ENCODE measurements at regions of chr9 and their contacts with region 1.

Region 1: DNA sequence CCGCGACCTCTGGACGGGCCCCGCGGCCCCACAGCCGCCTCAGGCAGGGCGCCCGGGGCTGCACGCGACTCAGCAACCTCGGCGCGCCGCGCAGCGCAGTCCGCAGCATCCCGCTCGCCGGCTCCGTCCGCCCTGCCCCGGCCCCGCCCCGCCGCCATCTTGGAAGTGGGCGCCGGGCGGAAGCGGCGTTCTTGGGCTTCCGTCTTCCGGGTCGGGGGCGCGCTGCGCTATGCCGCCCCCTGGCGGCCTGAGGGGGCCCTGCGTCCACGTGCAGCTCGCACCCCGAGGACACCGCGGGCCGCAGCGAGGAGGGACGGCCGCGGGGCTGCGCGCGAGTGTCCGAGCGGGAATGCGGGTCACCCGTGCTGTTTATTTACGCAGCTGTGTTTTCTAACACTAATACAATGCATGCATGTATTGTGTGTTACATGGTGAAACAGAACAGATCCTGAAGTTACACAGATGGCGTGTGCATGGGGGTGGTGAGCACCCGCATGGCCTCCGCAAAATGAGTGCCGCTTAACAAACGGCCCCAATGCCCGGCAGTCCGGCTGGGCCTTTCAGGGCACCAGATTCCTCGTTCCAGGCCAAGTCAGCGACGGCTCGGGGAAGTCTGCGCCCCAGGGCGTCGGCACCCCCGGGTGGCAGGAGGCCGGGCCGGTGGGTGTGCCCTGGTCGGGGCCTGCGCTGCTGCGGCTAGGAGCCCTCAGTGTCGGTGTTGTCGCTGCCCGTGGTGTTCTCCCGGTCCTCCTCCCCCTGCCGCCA is at the start of gene DNLZ:
- DNase-seq: peak; percentile 71 to 93 (median 90)
- ATAC-seq: peak; percentile 88
- H3K4me3 ChIP-seq: peak within 1 kb of the TSS; percentile 70
- H3K4me3 Mint-ChIP-seq: peak within 1 kb of the TSS; percentile 65 to 88 (median 84)
- H3K27ac ChIP-seq: peak within 1 kb of the TSS; percentile 75
- H3K27ac Mint-ChIP-seq: peak within 1 kb of the TSS; percentile 62 to 91 (median 75)
- H3K4me1 ChIP-seq: peaks cover 0 to 5% of the 10 kb centered on the region in 2 donors
- H3K4me1 Mint-ChIP-seq: peaks cover 0 to 6% (median 0%) of the 10 kb centered on the region in 7 donors
- H3K27me3 ChIP-seq: no peaks in the 10 kb centered on the region
- H3K27me3 Mint-ChIP-seq: no peaks in the 10 kb centered on the region
- total RNA-seq, gene DNLZ: 17.2 to 27.5 (median 24.8) TPM

Region 2: DNA sequence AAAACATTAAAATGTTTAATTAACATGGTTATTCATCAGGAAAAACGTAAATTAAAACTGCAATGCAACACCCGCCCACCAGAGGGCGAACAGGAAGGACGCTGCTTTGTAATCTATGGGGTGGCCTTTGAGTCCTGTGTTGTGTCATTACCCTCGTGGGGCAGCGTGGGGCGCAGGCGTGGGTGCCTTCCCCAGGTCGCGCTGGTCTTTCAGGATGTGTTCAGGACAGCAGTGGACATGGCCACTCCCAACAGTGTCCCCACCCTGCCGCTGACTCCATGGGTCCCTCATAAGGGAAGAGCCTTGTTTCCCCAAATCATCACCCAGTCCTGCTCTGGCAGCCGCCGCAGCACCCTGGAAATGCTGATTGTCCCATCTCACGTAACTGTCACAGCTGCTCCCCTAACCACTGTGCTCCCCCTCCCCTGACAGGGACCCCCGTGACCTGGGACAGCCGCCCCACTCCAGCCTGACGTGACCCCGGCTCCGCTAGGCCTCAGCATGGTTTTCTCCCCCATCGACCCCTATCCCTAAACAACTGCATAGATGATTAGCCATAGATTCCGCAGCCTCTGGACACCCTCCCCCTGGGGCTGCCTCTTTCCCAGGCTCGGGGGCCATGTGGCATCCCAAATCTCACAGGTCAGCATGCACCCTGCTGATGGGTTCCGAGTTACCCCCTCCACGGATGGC is 760.9 kb before region 1 on chr9:
- CTCF ChIA-PET with region 1: no interaction called
- POLR2A ChIA-PET with region 1: no interaction called
- intact Hi-C with region 1: no loop called
- DNase-seq: peak in 7 of 9 donors; percentile 31 to 56 (median 37)
- ATAC-seq: peak; percentile 61
- H3K4me3 ChIP-seq: no peak overlapping the region
- H3K4me3 Mint-ChIP-seq: no peak overlapping the region
- H3K27ac ChIP-seq: no peak overlapping the region
- H3K27ac Mint-ChIP-seq: no peak overlapping the region
- H3K4me1 ChIP-seq: no peaks in the 10 kb centered on the region
- H3K4me1 Mint-ChIP-seq: peaks cover 0 to 3% (median 0%) of the 10 kb centered on the region in 7 donors
- H3K27me3 ChIP-seq: no peaks in the 10 kb centered on the region
- H3K27me3 Mint-ChIP-seq: peaks cover 7 to 26% (median 8%) of the 10 kb centered on the region in 5 donors

Region 3: GRCh38 chr9:135961277-135961705 is 402.5 kb before region 1 on chr9 and contains the start of gene UBAC1:
- CTCF ChIA-PET with region 1: no interaction called
- POLR2A ChIA-PET with region 1: no interaction called
- intact Hi-C with region 1: loop called in 1 of 2 experiments (anchors 1 kb)
- DNase-seq: peak; percentile 91 to 96 (median 94)
- ATAC-seq: peak; percentile 97
- H3K4me3 ChIP-seq: peak within 1 kb of the TSS; percentile 65
- H3K4me3 Mint-ChIP-seq: peak within 1 kb of the TSS; percentile 78 to 93 (median 88)
- H3K27ac ChIP-seq: peak within 1 kb of the TSS; percentile 82
- H3K27ac Mint-ChIP-seq: peak within 1 kb of the TSS; percentile 74 to 94 (median 83)
- H3K4me1 ChIP-seq: peaks cover 15 to 16% of the 10 kb centered on the region in 2 donors
- H3K4me1 Mint-ChIP-seq: peaks cover 20 to 39% (median 30%) of the 10 kb centered on the region in 7 donors
- H3K27me3 ChIP-seq: no peaks in the 10 kb centered on the region
- H3K27me3 Mint-ChIP-seq: peaks cover 0 to 15% (median 0%) of the 10 kb centered on the region in 5 donors
- total RNA-seq, gene UBAC1: 28.6 to 36.1 (median 32.2) TPM

Region 4: DNA sequence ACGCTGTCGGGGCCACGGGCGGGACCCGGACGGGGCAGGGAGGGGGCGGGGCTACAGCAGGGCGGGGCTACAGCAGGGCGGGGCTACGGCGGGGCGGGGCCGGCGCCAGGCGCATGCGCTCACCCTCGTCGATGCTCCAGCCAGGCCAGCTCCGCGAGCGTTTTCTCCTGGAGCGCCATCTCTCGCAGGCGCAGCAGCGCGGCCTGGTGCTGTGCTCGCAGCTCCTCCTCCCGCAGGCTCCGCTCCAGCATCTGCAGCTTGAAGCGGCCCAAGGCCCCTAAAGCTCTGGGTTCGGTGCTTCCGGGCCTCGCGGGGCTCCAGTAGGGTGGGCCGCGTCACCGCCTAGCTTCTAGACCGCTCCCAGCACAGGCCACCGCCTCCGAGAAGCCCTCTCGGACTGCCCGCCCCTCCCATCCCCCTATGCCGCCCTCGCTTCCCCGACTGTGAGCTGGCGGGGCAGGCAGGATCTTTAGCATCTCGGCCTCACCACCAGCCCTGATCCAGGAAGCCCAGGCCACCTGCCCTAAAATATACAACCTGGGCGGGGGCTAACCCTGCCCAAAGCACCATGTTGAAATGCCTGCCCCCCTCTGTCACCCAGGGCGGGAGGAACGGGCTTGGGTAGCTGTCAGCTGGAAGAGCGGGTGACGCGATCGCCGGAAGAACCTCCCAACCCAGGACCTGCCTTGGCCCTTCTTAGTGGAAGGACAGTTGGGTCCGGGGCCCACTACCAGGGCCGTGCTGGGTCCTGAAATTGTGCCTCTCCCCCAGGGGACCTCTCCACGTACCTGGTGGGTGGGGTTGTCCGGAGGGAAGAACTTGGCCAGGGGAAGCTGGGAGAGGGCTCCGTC is 96.3 kb before region 1 on chr9:
- CTCF ChIA-PET with region 1: no interaction called
- POLR2A ChIA-PET with region 1: interaction called, 4 read pairs
- intact Hi-C with region 1: loop called in 1 of 2 experiments (anchors 1 kb)
- DNase-seq: peak; percentile 70 to 85 (median 80)
- ATAC-seq: peak; percentile 99
- H3K4me3 ChIP-seq: peak overlapping the region; percentile 74
- H3K4me3 Mint-ChIP-seq: peak overlapping the region; percentile 70 to 84 (median 79)
- H3K27ac ChIP-seq: peak overlapping the region; percentile 62
- H3K27ac Mint-ChIP-seq: peak overlapping the region; percentile 57 to 89 (median 77)
- H3K4me1 ChIP-seq: peaks cover 4 to 7% of the 10 kb centered on the region in 2 donors
- H3K4me1 Mint-ChIP-seq: peaks cover 0 to 14% (median 3%) of the 10 kb centered on the region in 7 donors
- H3K27me3 ChIP-seq: no peaks in the 10 kb centered on the region
- H3K27me3 Mint-ChIP-seq: peaks cover 0 to 14% (median 0%) of the 10 kb centered on the region in 5 donors

Region 5: DNA sequence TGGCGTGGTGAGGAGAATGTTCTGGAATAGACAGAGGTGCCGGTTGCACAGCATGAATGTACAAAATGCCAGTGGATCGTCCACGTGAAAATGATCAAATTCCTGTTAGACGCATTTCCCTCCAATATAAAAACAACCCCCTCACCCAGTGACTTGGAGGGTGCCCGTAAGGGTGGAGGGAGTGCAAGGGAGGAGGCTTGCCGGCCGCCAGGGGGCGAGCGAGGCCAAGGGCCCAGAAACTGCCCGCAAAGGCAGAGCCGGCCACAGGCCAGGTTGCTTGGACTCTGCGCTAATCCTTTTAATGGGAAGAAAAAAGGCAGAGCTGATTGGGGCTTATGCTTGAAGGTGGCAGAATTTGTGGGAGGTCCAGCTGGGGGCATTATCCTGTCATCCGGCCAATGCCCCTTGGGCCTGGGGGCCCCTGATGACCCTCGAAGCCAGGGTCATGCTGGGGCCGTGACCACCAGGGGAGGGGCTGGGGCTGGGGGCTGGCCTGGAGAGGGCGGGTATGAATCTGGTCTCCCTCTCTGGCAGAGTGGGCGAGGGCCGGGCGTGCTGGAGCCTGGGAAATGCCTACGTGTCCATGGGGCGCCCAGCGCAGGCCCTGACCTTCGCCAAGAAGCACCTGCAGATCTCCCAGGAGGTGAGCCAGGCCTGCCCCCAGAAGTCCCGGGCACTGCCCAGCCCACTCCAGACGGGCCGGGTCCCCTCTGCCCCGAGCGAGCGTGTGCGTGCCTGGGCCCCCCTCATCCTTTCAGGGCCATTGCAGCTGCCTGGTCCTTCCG is 24.4 kb before region 1 on chr9:
- CTCF ChIA-PET with region 1: no interaction called
- POLR2A ChIA-PET with region 1: no interaction called
- intact Hi-C with region 1: loop called in 1 of 2 experiments (anchors 1 kb)
- DNase-seq: peak in 2 of 9 donors; percentile 43 to 51
- ATAC-seq: peak; percentile 56
- H3K4me3 ChIP-seq: no peak overlapping the region
- H3K4me3 Mint-ChIP-seq: no peak overlapping the region
- H3K27ac ChIP-seq: no peak overlapping the region
- H3K27ac Mint-ChIP-seq: no peak overlapping the region
- H3K4me1 ChIP-seq: no peaks in the 10 kb centered on the region
- H3K4me1 Mint-ChIP-seq: no peaks in the 10 kb centered on the region
- H3K27me3 ChIP-seq: no peaks in the 10 kb centered on the region
- H3K27me3 Mint-ChIP-seq: no peaks in the 10 kb centered on the region

Region 6: GRCh38 chr9:136410500-136411287 is 46.9 kb after region 1 on chr9 and contains the starts of genes ENTR1 and PMPCA:
- CTCF ChIA-PET with region 1: no interaction called
- POLR2A ChIA-PET with region 1: interaction called, 6 read pairs
- intact Hi-C with region 1: loop called in 1 of 2 experiments (anchors 1 kb)
- DNase-seq: peak; percentile 90 to 99 (median 93)
- ATAC-seq: peak; percentile 94
- H3K4me3 ChIP-seq: peak within 1 kb of the TSS; percentile 96
- H3K4me3 Mint-ChIP-seq: peak within 1 kb of the TSS; percentile 83 to 93 (median 90)
- H3K27ac ChIP-seq: peak within 1 kb of the TSS; percentile 97
- H3K27ac Mint-ChIP-seq: peak within 1 kb of the TSS; percentile 78 to 95 (median 90)
- H3K4me1 ChIP-seq: peaks cover 18 to 26% of the 10 kb centered on the region in 2 donors
- H3K4me1 Mint-ChIP-seq: peaks cover 34 to 56% (median 45%) of the 10 kb centered on the region in 7 donors
- H3K27me3 ChIP-seq: no peaks in the 10 kb centered on the region
- H3K27me3 Mint-ChIP-seq: no peaks in the 10 kb centered on the region
- total RNA-seq, gene ENTR1: 56.3 to 89.0 (median 66.6) TPM
- total RNA-seq, gene PMPCA: 60.5 to 86.3 (median 71.6) TPM

Region 7: GRCh38 chr9:136728080-136728547 is 364.3 kb after region 1 on chr9:
- CTCF ChIA-PET with region 1: no interaction called
- POLR2A ChIA-PET with region 1: no interaction called
- intact Hi-C with region 1: loop called in 1 of 2 experiments (anchors 2 kb)
- DNase-seq: peak; percentile 87 to 97 (median 92)
- ATAC-seq: peak; percentile 96
- H3K4me3 ChIP-seq: peak overlapping the region; percentile 87
- H3K4me3 Mint-ChIP-seq: peak overlapping the region in 9 of 10 donors; percentile 47 to 99 (median 95)
- H3K27ac ChIP-seq: peak overlapping the region; percentile 83
- H3K27ac Mint-ChIP-seq: peak overlapping the region in 7 of 9 donors; percentile 47 to 93 (median 92)
- H3K4me1 ChIP-seq: peaks cover 16 to 17% of the 10 kb centered on the region in 2 donors
- H3K4me1 Mint-ChIP-seq: peaks cover 12 to 37% (median 28%) of the 10 kb centered on the region in 7 donors
- H3K27me3 ChIP-seq: no peaks in the 10 kb centered on the region
- H3K27me3 Mint-ChIP-seq: peaks cover 0 to 5% (median 0%) of the 10 kb centered on the region in 5 donors

Measured in naive thymus-derived CD4-positive, alpha-beta T cell (primary cell).